ENCODE measurements at regions of chr10 and their contacts with region 1.

Region 1: GRCh38 chr10:105138358-105138757 is 497.3 kb downstream of the SORCS3 start:
- DNase-seq: peak; percentile 65
- ATAC-seq: peak; percentile 86

Region 2: DNA sequence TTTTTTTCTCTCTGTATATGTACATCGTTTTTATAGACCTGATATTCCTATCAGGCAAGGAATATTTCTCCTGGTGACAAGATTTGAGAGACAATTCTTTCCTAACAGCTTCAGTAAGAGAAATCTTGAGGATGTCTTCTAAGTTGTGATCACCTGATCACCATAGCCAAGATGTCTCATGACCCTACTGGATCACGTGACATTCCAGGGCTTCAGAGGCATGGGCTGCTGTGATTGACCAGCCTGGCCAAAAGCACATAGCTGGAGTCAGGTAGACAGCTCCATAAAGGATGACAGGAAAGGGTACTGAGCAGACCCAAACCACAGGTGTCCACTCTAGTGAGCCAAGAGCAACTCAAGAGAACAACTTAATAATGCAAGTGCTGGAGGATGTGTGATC is 52.4 kb before region 1 on chr10:
- intact Hi-C with region 1: no loop called
- DNase-seq: no peak
- ATAC-seq: no peak

Region 3: DNA sequence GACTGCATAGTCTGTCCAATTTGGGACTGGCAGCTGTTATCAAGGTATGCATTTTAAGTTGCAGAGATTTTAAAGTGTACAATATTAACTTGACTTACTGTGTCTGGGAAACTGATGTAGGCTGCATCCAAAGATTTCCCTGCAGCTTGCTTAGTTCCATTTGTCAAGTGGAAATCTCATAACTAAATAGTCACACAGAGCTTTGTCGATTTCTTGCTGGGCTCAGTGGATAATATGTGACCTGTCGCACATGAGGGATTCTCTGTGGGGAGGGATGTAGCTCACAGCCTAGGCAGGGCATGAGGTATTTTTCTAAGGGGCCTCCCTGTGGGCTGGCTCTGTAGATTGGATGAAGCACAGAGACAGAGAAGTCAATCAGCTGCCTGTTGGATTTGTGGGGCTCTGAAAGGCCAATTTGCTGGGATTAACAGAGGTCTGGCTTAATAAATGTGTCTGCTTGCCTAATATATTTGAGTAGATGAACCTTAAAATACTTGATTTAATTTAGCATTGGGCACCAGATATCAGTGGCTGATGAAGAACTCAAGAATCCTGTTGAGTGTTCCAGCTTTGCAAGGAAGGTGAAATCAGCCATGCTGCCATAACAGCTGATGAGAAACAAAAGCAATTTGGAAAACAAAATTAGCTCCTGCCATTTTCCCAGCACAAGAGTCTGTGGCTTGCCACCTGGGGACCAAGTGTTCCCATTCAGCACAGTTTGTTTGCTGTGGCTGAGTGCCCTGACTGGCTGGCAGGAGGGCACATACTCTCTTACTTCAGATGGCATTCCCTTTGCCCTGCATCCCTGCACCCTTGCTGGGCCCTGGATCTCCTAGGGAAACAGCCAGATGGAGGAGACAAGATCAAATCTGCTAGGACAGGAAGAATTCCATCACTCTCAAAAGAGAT is 101.2 kb after region 1 on chr10:
- intact Hi-C with region 1: loop called (anchors 5 kb)
- DNase-seq: no peak
- ATAC-seq: peak; percentile 94

Region 4: DNA sequence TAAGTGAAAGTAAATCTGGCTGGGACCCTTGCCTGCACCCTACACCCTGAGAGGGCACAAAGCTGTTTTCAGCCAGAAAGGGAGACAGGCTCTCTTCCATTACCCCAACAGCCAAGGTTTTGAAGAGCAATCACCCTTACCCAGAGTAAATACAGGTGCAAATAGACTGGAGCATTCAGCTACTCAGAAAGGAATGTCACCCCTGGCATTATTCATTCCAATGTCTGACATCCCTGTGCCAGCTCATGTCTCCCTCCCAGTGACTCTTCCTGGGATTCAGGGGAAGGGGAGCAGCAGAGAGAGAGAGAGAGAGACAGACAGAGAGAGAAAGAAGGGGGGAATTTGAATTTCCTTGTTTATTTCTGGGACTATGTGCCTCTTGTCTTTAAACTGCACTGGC is 114.5 kb after region 1 on chr10:
- intact Hi-C with region 1: loop called (anchors 5 kb)
- DNase-seq: no peak
- ATAC-seq: no peak

Region 5: GRCh38 chr10:105398202-105398601 is 259.8 kb after region 1 on chr10:
- intact Hi-C with region 1: loop called (anchors 5 kb)
- DNase-seq: no peak
- ATAC-seq: peak; percentile 57

Region 6: GRCh38 chr10:105473170-105473569 is 334.8 kb after region 1 on chr10:
- intact Hi-C with region 1: loop called (anchors 10 kb)
- DNase-seq: no peak
- ATAC-seq: peak; percentile 56

Region 7: DNA sequence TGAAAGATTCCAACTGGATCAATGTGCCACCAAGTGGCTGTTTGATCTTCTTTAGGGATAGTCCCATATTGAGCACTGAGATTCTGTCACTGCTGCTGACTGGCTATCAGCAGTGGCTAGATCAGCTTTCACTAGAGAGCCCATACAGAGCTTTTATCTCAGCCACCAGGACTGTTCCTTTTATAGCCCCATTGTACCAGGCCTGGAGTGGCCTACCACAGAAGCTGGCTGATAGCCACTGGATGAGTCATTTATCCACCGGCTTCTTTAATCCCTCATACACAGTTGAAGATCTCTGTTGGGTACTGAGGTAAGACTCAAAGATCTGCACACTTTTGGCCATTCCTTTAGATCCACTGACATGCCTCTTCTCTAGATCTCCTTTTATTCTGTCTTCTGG is 603.8 kb after region 1 on chr10:
- intact Hi-C with region 1: loop called (anchors 2 kb)
- DNase-seq: no peak
- ATAC-seq: peak; percentile 87

Measured in Right ventricle myocardium inferior (tissue), 1 donor.